IMR-90 (cell line): ENCODE measurements at regions of chr6 and their contacts with region 1.

Region 1: DNA sequence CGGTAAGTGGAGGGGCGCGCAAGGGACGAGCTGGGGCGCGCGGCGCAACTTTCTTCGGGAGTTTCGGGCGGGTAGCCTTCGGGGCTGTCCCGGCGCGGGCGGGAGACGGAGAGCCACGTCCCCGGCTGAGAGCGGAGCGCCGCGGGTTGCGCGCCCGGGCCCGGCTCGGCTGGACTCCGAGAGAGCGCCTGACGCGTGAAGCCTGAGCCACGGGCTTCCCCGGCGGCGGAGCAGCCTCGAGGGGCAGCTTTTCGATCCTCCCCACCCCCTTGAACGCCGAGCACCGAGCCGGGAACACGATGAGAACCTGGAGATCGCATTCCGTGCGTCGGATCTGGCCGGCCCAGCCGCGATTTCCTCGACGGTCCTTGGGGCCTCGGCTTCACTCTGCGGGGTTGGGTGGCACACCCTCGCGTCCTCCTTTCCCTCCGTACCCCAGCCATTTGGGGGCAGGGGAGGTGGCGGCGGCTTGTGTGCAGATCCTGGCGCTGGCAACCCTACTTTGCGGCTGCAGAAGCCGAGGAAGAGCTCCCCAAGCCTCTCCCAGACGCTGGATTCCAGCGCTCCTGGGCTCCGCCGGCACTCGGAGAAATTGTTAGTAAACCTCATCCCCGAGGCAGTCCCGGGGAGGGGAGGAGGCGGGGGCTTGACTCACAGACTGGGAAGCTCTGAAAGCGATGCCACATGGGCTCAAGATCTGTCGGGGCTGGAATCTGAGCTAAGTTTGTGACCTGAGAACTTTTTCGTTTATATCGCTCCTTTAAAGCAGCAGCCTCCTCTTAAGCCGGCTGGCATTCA is 572 bp downstream of the DSE start:
- DNase-seq: peak; percentile 94
- ATAC-seq: peak; percentile 78
- H3K4me3 ChIP-seq: peak overlapping the region; percentile 63
- H3K27ac ChIP-seq: peak overlapping the region; percentile 98
- H3K4me1 ChIP-seq: peaks cover 9% of the 10 kb centered on the region
- H3K27me3 ChIP-seq: no peaks in the 10 kb centered on the region
- CTCF ChIP-seq: no peak
- POLR2A ChIP-seq: peak; percentile 59; the same call in 1 of the 2 replicates
- RAD21 ChIP-seq: peak; percentile 28; the same call in 1 of the 2 replicates

Region 2: DNA sequence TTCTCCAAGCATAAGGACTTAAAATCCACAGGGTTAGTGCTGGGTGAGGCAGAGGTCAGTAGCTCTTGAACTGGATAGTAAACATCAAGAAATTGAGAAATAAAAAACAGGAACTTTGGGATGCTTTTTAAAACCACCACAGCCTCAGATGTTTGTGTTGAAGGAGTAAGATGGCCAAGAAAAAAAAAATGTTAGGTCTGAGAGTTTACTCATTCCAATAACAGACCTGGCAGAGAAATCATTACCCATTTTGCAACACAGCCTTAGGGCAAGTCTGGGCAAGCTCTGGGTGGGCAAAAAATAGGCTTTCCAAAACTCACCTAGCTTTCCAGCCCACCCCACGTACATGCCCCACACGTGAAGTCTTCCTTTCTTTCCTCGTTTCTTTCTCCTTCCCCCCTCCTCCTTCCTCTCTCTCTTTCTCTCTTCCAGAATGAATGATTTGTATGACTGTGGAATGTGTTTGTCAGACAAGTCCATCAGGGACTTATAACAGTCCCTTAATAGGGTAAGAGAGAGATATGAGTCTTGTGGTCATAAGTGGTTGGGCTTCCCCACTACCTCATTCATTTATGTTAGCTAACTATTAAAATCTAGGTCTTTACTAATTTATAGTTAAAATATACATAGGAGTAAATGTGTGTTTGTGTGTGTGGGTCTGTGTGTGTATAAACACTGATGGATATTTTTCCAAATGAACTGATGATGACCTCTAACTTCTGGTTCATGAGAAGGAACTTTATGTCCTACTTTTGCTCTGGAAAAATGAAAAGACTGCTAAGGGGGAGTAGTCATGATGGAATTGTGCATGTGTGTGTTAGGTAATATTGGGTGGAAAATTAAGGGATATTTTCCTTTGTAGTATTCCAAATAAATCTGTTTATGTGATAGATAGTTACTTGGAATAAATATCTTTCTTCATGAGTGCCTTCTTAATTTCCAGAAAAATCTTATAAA is 18.5 kb before region 1 on chr6:
- CTCF ChIA-PET with region 1: no interaction called
- POLR2A ChIA-PET with region 1: interaction called, 10 read pairs
- dilution Hi-C with region 1: no loop called
- in situ Hi-C with region 1: no loop called
- intact Hi-C with region 1: no loop called
- DNase-seq: peak; percentile 63
- ATAC-seq: peak; percentile 86
- H3K4me3 ChIP-seq: no peak overlapping the region
- H3K27ac ChIP-seq: peak overlapping the region; percentile 100
- H3K4me1 ChIP-seq: peaks cover 7% of the 10 kb centered on the region
- H3K27me3 ChIP-seq: no peaks in the 10 kb centered on the region
- CTCF ChIP-seq: no peak
- POLR2A ChIP-seq: no peak
- RAD21 ChIP-seq: no peak

Region 3: DNA sequence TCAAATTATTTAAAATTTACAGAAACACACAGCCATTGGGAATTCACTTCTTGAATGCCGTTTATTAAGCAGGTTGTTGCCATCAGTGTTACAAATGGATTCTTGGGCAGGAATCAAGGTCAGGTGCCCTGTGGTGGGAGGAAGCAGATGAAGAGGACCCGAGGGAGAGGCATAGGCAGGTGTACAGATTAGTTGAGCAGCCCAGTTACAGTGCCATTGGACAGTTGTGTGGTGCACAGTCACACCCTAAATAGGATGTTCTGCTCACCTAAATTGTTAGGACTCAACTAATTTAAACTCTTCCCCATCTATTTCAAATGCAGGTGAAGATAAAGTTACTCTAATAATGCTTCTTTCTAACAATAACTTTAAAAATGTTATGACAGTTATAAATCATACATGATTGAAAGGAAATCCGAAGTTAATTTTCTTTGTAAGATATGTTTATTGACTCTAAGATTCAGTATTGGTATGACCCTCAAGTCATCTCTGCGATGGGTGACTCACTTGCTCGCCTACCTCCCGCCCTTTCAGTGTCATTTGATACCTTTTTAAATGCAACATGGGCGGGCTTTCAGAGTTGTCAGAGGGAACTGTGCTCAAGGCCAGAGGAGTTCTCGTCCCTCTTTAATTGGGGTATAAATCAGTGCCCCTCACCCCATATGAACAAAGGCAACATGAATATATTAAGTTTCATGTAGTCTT is 34.5 kb after region 1 on chr6:
- CTCF ChIA-PET with region 1: no interaction called
- POLR2A ChIA-PET with region 1: no interaction called
- dilution Hi-C with region 1: no loop called
- in situ Hi-C with region 1: no loop called
- intact Hi-C with region 1: loop called (anchors 2 kb)
- DNase-seq: peak; percentile 86
- ATAC-seq: peak; percentile 58; the same call in 1 of the 2 replicates
- H3K4me3 ChIP-seq: no peak overlapping the region
- H3K27ac ChIP-seq: peak overlapping the region; percentile 43; the same call in 1 of the 2 replicates
- H3K4me1 ChIP-seq: peaks cover 13% of the 10 kb centered on the region
- H3K27me3 ChIP-seq: no peaks in the 10 kb centered on the region
- CTCF ChIP-seq: no peak
- POLR2A ChIP-seq: no peak
- RAD21 ChIP-seq: no peak

Region 4: GRCh38 chr6:116511404-116512110 is 140.2 kb after region 1 on chr6 and contains the start of gene CALHM5:
- CTCF ChIA-PET with region 1: no interaction called
- POLR2A ChIA-PET with region 1: no interaction called
- dilution Hi-C with region 1: no loop called
- in situ Hi-C with region 1: no loop called
- intact Hi-C with region 1: loop called (anchors 2 kb)
- DNase-seq: peak; percentile 94
- ATAC-seq: peak; percentile 86
- H3K4me3 ChIP-seq: peak within 1 kb of the TSS; percentile 51
- H3K27ac ChIP-seq: peak within 1 kb of the TSS; percentile 92
- H3K4me1 ChIP-seq: peaks cover 5% of the 10 kb centered on the region
- H3K27me3 ChIP-seq: no peaks in the 10 kb centered on the region
- CTCF ChIP-seq: peak; percentile 85
- POLR2A ChIP-seq: no peak; the same call in 1 of the 2 replicates
- RAD21 ChIP-seq: peak; percentile 50
- total RNA-seq, gene CALHM5: 10.6 and 10.8 TPM in 2 replicates

Region 5: DNA sequence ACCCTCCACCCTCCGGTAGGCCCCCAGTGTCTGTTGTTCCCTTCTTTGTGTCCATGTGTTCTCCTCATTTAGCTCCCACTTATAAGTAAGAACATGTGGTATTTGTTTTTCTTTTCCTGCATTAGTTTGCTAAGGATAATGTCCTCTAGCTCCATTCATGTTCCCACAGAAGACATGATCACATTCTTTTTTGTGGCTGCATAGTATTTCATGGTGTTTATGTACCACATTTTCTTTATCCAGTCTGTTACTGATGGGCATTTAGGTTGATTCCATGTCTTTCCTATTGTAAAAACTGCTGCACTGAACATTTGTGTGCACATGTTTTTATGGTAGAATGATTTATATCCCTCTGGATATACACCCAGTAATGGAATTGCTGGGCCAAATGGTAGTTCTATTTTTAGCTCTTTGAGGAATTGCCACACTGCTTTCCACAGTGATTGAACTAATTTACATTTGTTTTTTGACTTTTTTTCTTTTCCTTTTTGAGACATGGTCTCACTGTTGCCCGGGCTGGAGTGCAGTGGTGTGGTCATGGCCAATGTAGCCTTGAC is 314.2 kb after region 1 on chr6:
- CTCF ChIA-PET with region 1: no interaction called
- POLR2A ChIA-PET with region 1: no interaction called
- dilution Hi-C with region 1: no loop called
- in situ Hi-C with region 1: no loop called
- intact Hi-C with region 1: no loop called
- DNase-seq: no peak
- ATAC-seq: no peak
- H3K4me3 ChIP-seq: no peak overlapping the region
- H3K27ac ChIP-seq: no peak overlapping the region
- H3K4me1 ChIP-seq: no peaks in the 10 kb centered on the region; the same call in 1 of the 2 replicates
- H3K27me3 ChIP-seq: no peaks in the 10 kb centered on the region
- CTCF ChIP-seq: no peak
- POLR2A ChIP-seq: no peak
- RAD21 ChIP-seq: no peak